K562 (cell line): ENCODE measurements at regions of chr3 and their contacts with region 1.

Region 1: GRCh38 chr3:134378384-134378783 is 4.1 kb upstream of the AMOTL2 start:
- DNase-seq: peak; percentile 33 to 60 (median 42)
- ATAC-seq: peak; percentile 91
- H3K4me3 ChIP-seq: no peak overlapping the region
- H3K27ac ChIP-seq: no peak overlapping the region
- H3K4me1 ChIP-seq: peaks cover 0 to 9% of the 10 kb centered on the region in 2 experiments; a peak in 2 of 5 replicates
- H3K27me3 ChIP-seq: peaks cover 0 to 33% of the 10 kb centered on the region in 2 experiments; a peak in 2 of 5 replicates
- CTCF ChIP-seq: peak; percentile 47 to 61 (median 57); a peak in 5 of 6 replicates
- EP300 ChIP-seq: no peak
- POLR2A ChIP-seq: no peak
- RAD21 ChIP-seq: peak; percentile 38 to 66

Region 2: DNA sequence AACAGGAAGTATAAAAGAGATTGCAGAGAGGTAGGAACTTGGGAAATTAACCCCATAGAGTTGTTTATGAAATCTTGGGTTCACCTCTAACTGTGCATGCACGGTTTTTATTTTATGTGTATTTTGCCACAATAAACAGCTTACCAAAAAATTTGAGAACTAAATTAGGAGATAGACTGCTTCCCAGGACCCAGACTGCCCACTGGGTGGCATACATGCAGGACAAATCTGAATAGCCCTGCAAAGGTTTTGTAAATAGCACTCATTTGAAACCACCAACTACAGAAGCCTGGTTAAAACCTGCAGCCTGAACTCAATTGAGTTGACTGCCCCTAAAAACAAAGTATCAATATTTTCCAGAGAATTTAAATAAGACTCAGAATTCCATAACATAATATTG is 252.2 kb before region 1 on chr3:
- CTCF ChIA-PET with region 1: no interaction called
- POLR2A ChIA-PET with region 1: no interaction called
- in situ Hi-C with region 1: no loop called
- intact Hi-C with region 1: no loop called
- DNase-seq: no peak
- ATAC-seq: no peak
- H3K4me3 ChIP-seq: no peak overlapping the region
- H3K27ac ChIP-seq: no peak overlapping the region
- H3K4me1 ChIP-seq: no peaks in the 10 kb centered on the region
- H3K27me3 ChIP-seq: peaks cover 0 to 5% of the 10 kb centered on the region in 2 experiments; a peak in 1 of 5 replicates
- CTCF ChIP-seq: no peak
- EP300 ChIP-seq: no peak
- POLR2A ChIP-seq: no peak
- RAD21 ChIP-seq: no peak

Region 3: DNA sequence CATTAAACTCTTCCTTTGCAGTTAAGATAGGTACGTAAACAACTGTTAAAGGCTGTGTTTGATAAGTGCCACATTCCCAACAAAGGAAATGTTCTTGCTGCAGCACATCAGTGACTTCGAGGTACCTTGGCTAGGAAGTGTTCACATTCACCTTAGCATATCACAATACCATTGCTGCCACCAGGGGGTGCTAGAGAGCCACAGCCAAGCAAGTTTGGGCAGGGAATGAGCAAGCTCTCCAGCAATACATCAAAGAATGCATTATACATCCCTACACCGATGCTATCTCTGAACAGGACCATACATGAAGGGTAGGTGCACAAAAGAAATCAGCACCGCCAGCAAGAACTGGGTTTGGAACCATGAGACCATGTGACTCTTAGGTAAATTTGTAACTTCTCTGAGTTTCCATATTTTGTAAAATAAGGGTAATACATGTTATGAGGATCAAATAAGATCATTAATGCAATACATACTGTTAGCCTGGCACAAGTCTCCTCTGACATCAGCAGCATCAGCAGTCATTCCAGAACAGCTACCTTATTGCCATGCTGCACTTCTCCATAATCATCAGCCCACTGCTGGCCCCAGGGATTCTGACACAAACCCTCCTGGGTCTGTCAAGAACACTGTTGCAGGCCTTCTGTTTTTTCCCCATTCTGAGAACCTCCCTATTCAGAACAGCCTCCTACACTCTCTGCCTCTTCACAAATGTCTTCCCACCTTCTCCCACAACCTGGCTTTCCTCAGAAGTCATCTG is 165.3 kb before region 1 on chr3:
- CTCF ChIA-PET with region 1: no interaction called
- POLR2A ChIA-PET with region 1: no interaction called
- in situ Hi-C with region 1: no loop called
- intact Hi-C with region 1: loop called (anchors 5 kb)
- DNase-seq: peak; percentile 62 to 77 (median 64)
- ATAC-seq: peak; percentile 96
- H3K4me3 ChIP-seq: no peak overlapping the region
- H3K27ac ChIP-seq: no peak overlapping the region
- H3K4me1 ChIP-seq: no peaks in the 10 kb centered on the region; a peak in 1 of 5 replicates
- H3K27me3 ChIP-seq: no peaks in the 10 kb centered on the region
- CTCF ChIP-seq: peak; percentile 79 to 81 (median 80)
- EP300 ChIP-seq: no peak
- POLR2A ChIP-seq: no peak
- RAD21 ChIP-seq: peak; percentile 51 to 72

Region 4: DNA sequence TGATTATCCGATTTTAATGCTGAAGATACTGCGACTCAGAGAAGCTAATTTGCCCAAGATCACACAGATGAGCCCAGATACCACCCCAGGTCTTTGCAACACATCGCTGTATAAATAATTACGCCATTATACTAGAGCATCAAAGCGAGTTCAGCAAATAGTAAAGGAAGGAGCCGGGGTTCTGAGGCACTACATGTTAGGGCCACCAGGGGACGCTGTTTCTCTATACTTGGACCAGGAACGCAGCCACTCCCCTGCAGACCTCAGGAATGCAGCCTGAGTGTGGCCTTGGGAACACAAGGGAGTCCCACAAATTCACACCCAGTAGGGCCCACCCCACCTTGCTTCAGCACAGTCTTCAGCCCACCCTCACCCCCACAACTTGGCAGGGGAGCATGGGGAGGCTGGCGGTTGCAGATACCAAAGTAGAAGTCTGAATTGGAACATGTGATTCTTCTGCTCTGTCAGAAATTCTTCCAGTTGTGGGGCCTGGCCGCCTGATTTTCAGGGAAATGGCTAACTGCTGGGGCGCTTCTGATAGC is 70.0 kb before region 1 on chr3:
- CTCF ChIA-PET with region 1: no interaction called
- POLR2A ChIA-PET with region 1: no interaction called
- in situ Hi-C with region 1: no loop called
- intact Hi-C with region 1: loop called (anchors 1 kb)
- DNase-seq: peak; percentile 62 to 71 (median 68)
- ATAC-seq: peak; percentile 91
- H3K4me3 ChIP-seq: no peak overlapping the region
- H3K27ac ChIP-seq: no peak overlapping the region
- H3K4me1 ChIP-seq: peaks cover 0 to 11% of the 10 kb centered on the region in 2 experiments; a peak in 2 of 5 replicates
- H3K27me3 ChIP-seq: peaks cover 2 to 35% of the 10 kb centered on the region in 2 experiments; a peak in 3 of 5 replicates
- CTCF ChIP-seq: peak; percentile 84 to 94 (median 92)
- EP300 ChIP-seq: no peak
- POLR2A ChIP-seq: no peak
- RAD21 ChIP-seq: peak; percentile 79 to 90